ENCODE measurements at regions of chr1 and their contacts with region 1.

Region 1: DNA sequence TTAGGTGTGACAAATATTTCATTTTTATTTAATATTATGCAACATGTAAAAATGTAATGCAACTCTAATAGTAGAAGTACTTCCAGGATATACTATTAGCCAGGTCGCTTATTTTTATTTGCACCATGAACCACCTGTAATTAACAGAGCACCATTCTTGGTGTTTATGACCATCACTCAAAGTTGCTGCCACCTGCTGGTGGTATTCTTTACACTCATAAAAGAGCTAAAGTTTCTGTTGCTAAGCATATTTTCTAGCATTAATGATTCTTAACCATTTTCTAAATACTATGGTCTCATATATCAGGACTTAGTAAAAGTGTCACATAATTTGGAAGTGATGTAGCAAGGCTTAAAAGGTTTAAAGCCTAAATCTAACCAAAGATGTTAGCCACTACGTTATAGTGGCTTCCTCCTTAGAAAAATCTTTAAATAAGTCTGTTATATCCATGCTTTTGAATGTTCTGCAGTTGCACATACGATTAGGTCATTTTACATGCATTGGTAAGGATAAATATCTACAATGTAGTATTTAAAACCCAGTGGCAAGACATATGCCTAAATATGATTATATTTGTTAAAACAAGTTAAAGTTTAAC is 244.5 kb downstream of the NEGR1 start:
- DNase-seq: peak in 2 of 5 donors; percentile 10 to 20
- ATAC-seq: no peak
- H3K4me3 ChIP-seq: no peak overlapping the region
- H3K27ac ChIP-seq: no peak overlapping the region
- H3K4me1 ChIP-seq: no peaks in the 10 kb centered on the region
- H3K27me3 ChIP-seq: no peaks in the 10 kb centered on the region
- CTCF ChIP-seq: peak in 11 of 12 donors; percentile 35 to 64 (median 53)
- POLR2A ChIP-seq: no peak

Region 2: DNA sequence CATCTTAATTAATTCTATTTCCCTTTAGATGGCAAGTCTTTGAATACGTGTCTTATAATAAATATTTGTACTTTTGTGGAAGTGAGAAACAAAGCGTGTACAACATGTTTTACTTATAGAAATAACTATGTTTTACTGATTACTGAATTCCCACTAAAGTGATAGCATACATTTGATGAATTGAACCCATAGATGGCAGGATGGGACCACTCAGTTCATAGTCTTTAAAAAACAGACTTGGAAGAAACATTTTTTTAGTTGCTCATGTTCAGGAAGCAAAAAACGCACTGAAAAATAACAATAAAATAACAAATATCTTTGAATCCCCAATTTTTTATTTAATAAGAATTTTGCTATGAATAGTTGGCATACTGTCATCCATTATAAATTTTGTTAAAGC is 449.9 kb before region 1 on chr1:
- intact Hi-C with region 1: loop called (anchors 2 to 10 kb)
- DNase-seq: no peak
- ATAC-seq: peak in 2 of 4 donors; percentile 42 to 60
- H3K4me3 ChIP-seq: no peak overlapping the region
- H3K27ac ChIP-seq: no peak overlapping the region
- H3K4me1 ChIP-seq: peaks cover 0 to 9% (median 0%) of the 10 kb centered on the region in 12 donors
- H3K27me3 ChIP-seq: no peaks in the 10 kb centered on the region
- CTCF ChIP-seq: peak in 11 of 12 donors; percentile 8 to 54 (median 46)
- POLR2A ChIP-seq: no peak

Region 3: GRCh38 chr1:71593523-71593922 is 444.3 kb before region 1 on chr1:
- intact Hi-C with region 1: loop called (anchors 2 to 10 kb)
- DNase-seq: no peak
- ATAC-seq: no peak
- H3K4me3 ChIP-seq: no peak overlapping the region
- H3K27ac ChIP-seq: no peak overlapping the region
- H3K4me1 ChIP-seq: peaks cover 0 to 9% (median 0%) of the 10 kb centered on the region in 12 donors
- H3K27me3 ChIP-seq: no peaks in the 10 kb centered on the region
- CTCF ChIP-seq: peak in 2 of 12 donors; percentile 20 to 23
- POLR2A ChIP-seq: no peak